ENCODE measurements at regions of chr14 and their contacts with region 1.

Region 1: GRCh38 chr14:96071561-96071960 is 32.4 kb downstream of the C14orf132 start:
- DNase-seq: no peak
- H3K4me3 Mint-ChIP-seq: no peak overlapping the region
- H3K27ac Mint-ChIP-seq: no peak overlapping the region
- H3K4me1 Mint-ChIP-seq: no peaks in the 10 kb centered on the region
- H3K27me3 Mint-ChIP-seq: peaks cover 16% of the 10 kb centered on the region
- CTCF ChIP-seq: no peak

Region 2: DNA sequence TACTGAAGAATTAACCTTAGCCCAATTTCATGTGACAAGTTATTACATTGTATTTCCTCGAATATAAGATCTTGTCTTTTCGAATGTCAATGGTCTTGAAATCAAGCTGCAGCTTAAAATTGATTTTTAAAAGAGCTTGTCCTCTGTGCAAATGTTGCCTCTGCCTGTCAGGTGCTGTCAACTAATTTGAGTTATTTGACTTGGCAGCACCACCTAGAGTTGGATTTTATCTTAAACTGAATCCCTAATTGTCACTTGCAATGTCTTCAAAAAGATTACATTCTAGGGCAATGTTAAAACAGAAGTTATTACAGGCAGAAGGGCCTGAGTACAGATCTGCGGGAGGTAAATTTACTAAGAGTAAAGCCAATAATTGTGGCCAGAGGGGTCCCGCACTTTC is 221.1 kb before region 1 on chr14:
- CTCF ChIA-PET with region 1: no interaction called
- POLR2A ChIA-PET with region 1: no interaction called
- intact Hi-C with region 1: no loop called
- DNase-seq: no peak
- H3K4me3 Mint-ChIP-seq: no peak overlapping the region
- H3K27ac Mint-ChIP-seq: no peak overlapping the region
- H3K4me1 Mint-ChIP-seq: no peaks in the 10 kb centered on the region
- H3K27me3 Mint-ChIP-seq: peaks cover 71% of the 10 kb centered on the region
- CTCF ChIP-seq: no peak

Region 3: DNA sequence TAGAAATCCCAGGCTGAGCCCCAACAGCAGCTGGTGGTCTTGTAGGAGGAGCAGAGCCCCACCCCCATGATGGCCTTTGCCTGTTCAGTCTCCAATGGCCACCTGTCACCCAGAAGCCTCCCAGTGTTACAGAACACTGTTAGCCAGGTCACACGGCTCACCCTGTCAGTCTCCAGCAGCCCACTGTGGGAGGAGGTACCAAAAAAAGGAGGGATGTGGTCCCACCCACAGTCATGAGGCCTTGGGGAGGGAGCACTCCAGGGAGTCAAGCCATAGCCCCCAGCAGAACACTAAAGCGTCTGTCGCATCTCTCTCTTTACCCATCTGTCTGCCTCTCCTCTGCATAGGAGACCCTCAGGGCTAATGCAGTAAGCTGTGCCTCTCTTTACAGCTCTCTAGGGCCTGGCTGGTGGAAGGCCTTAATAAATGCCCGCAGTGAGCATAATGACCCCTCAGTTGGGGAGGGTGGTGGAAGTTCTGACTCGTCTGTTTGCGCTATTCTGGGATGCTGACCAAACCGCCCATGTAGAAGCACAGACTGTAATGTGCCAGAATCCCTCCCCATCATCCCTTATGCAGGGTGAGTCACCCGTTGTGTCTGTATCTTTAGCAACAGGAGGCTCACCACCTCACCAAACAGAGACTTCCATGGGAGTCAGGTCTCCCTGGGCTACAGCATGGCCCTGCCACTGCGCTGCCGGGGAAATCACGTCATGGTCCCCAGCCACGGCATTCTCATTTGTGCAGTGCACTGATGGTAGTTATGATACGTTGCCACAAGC is 17.8 kb before region 1 on chr14:
- CTCF ChIA-PET with region 1: interaction called, 10 read pairs
- POLR2A ChIA-PET with region 1: no interaction called
- intact Hi-C with region 1: no loop called
- DNase-seq: peak; percentile 57
- H3K4me3 Mint-ChIP-seq: no peak overlapping the region
- H3K27ac Mint-ChIP-seq: no peak overlapping the region
- H3K4me1 Mint-ChIP-seq: peaks cover 5% of the 10 kb centered on the region
- H3K27me3 Mint-ChIP-seq: peaks cover 26% of the 10 kb centered on the region
- CTCF ChIP-seq: no peak

Measured in MCF 10A (cell line).